ENCODE measurements at regions of chr5 and their contacts with region 1.

Region 1: DNA sequence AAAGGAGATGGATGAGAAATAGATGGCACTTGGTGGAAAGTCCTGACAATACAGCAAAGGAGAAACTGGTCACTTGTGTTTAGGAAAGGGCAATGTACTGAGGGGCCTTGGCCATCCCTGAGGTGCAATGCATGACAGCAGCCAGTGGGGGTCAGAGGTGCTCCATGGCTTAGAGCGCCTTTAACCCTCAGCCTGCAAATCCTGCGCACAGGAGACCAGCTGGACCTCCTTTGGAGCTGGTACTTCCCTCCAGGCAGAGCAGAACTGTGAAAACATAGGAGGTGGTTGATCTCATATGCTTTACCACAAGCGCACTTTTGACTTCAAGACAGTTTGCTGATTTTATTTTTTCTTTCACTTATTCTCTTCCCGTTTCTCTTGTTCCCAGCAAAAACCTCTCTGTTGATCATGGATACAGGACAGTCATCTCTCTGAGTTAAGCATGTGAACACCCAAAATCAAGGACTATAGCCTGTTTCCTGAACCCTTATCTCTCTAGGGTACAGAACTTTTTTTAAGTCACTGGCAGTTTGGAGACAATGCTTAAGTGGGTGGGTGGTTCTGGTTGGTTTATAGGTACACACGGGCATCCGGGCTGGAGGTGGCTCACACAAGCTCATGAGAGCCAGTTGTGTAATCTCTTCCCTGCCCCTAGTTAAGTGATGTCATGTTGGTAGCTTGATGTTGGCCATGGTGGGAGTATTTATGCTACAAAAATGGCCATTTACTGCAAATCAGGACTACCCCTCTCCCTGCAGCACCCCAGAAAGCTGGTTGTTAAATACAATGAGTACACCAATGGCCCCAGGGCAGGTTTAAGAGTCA is 37.6 kb upstream of the ANKRD55 start:
- DNase-seq: peak; percentile 80 to 87 (median 86)
- ATAC-seq: peak; percentile 97 to 100 (median 98)
- H3K4me3 ChIP-seq: no peak overlapping the region
- H3K27ac ChIP-seq: peak overlapping the region in 1 of 12 donors; percentile 48
- H3K4me1 ChIP-seq: peaks cover 0 to 19% (median 2%) of the 10 kb centered on the region in 12 donors
- H3K27me3 ChIP-seq: no peaks in the 10 kb centered on the region
- CTCF ChIP-seq: peak; percentile 95 to 100 (median 99)
- POLR2A ChIP-seq: no peak

Region 2: GRCh38 chr5:56375011-56375410 is 104.2 kb after region 1 on chr5:
- intact Hi-C with region 1: no loop called
- DNase-seq: peak in 3 of 5 donors; percentile 11 to 66 (median 60)
- ATAC-seq: peak; percentile 89 to 98 (median 94)
- H3K4me3 ChIP-seq: no peak overlapping the region
- H3K27ac ChIP-seq: peak overlapping the region in 1 of 12 donors; percentile 4
- H3K4me1 ChIP-seq: peaks cover 0 to 12% (median 0%) of the 10 kb centered on the region in 12 donors
- H3K27me3 ChIP-seq: no peaks in the 10 kb centered on the region
- CTCF ChIP-seq: no peak
- POLR2A ChIP-seq: no peak

Region 3: DNA sequence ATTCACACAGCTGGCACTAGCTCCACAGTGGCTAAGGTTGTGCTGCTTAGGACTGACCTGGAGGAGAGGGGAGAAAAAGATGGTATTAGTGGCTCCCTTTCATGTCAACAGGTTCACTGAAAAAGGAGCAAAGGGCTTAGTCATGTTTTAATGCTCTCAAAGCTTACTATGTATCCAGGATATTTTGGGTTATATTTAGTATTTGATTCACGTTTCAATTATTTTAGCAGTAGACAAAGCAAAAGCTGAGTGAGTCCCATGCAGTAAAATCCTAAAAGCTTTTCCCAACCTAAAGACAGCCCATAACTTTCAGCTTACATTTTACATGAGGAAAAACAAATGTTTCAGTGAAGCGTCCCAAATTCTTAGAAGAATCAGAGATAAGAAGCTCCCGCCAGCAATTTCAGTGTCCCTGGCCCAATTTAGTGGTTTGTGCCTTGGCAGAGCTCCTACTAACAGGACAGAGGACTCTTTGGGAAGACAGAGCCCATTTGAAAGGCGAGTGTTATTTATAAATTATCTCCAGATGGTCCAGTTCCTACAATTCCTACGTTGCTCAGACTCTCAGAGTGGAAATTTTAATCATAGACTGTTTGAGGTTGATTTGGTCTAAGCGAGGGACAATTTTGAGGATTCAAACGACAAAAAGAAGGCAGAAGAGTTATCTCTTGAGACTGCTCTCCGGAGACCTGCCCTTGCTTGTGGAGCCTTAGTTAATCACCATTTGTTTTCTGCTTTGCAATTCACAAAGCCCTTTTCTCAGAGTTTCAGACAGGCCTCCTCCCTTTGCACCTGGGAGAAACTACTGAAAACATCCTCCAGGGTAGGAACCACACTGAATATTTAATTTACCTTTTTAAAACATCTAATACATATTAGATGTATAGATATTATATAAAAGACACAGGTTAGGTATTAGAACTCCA is 187.4 kb after region 1 on chr5:
- intact Hi-C with region 1: loop called in 1 of 10 experiments (anchors 10 kb)
- DNase-seq: peak in 3 of 5 donors; percentile 42 to 61 (median 54)
- ATAC-seq: peak; percentile 68 to 82 (median 73)
- H3K4me3 ChIP-seq: no peak overlapping the region
- H3K27ac ChIP-seq: peak overlapping the region in 10 of 12 donors; percentile 28 to 69 (median 52)
- H3K4me1 ChIP-seq: peaks cover 0 to 41% (median 17%) of the 10 kb centered on the region in 12 donors
- H3K27me3 ChIP-seq: no peaks in the 10 kb centered on the region
- CTCF ChIP-seq: no peak
- POLR2A ChIP-seq: no peak

Region 4: DNA sequence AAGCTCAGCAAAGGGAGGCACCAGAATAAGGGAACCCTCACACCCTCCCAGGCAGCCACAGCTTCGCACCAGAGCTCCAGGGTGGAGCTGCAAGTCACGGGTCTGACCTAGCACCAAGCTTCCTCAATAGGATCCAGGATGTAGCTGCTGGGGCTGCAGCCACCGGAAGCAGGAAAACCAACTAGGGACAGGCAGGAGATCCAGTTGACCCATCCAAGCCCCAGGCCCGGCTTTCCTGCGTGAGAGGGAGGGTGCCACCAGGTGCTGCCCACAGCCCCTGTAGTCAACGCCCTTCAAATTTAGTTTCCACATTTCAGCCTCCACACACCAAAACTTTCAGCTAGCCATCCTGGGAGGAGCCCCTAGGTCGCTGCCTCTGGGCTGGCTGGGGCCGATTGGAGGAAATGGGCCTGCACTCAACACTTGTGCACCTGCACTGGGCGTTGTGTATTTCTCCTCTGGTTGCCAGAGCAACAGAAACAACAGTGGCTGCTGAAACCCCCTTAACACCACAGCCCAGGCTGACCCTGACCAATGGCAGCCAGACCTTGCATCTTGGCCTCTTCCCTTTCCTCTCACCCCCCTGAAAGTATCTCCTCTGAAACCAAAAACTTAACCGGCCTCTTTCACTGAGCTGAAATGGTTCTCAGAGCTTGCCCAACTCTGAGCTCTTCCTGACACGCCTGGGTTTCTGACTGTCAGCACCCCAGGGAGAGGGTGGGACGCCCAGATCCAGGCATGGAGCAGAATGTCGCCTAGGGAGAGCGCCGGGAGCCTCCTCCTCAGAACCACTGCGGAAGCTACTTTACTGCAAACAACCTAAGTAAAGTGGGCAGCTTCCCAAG is 318.1 kb after region 1 on chr5:
- intact Hi-C with region 1: loop called in 1 of 10 experiments (anchors 10 kb)
- DNase-seq: peak; percentile 61 to 86 (median 72)
- ATAC-seq: peak; percentile 23 to 71 (median 64)
- H3K4me3 ChIP-seq: no peak overlapping the region
- H3K27ac ChIP-seq: peak overlapping the region; percentile 1 to 84 (median 61)
- H3K4me1 ChIP-seq: peaks cover 4 to 52% (median 39%) of the 10 kb centered on the region in 12 donors
- H3K27me3 ChIP-seq: no peaks in the 10 kb centered on the region
- CTCF ChIP-seq: no peak
- POLR2A ChIP-seq: no peak

Region 5: GRCh38 chr5:56696900-56697299 is 426.1 kb after region 1 on chr5:
- intact Hi-C with region 1: loop called in 2 of 10 experiments (anchors 10 kb)
- DNase-seq: peak in 2 of 5 donors; percentile 30
- ATAC-seq: no peak
- H3K4me3 ChIP-seq: no peak overlapping the region
- H3K27ac ChIP-seq: peak overlapping the region in 1 of 12 donors; percentile 24
- H3K4me1 ChIP-seq: peaks cover 0 to 45% (median 27%) of the 10 kb centered on the region in 12 donors
- H3K27me3 ChIP-seq: no peaks in the 10 kb centered on the region
- CTCF ChIP-seq: no peak
- POLR2A ChIP-seq: no peak

Region 6: DNA sequence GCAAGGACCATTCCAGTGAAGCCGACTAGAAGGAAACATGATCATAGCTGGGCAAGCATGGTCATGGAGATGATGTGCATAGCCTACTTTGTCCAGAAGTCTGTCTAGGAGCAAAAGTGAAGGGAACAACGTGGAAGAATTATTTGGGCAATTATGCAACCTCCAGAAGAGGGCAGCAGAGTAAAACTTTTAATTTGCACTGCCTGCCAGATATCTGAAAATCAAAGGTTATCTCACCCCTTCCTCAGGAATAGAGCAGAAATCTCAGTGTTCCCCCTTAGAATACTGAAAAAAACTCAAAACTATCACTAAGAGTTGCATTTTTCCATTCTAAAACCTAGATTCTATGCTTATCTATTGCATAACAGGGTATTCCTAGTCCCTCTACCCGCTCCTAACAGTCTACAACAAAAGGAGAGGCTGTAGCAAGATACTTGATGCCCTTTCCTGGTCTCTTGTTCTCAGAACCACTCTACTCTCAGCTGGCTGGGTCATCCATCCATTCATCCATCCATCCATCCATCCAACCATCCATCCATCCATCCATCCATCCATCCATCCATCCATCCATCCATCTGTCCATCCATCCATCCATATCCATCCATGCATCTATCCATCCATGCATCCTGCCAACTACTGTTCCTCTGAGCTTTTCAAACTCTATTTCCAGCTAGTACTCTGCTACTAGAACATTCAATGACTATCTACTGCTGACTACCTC is 630.2 kb after region 1 on chr5:
- intact Hi-C with region 1: loop called in 1 of 10 experiments (anchors 5 kb)
- DNase-seq: no peak
- ATAC-seq: peak in 3 of 4 donors; percentile 47 to 66 (median 53)
- H3K4me3 ChIP-seq: no peak overlapping the region
- H3K27ac ChIP-seq: no peak overlapping the region
- H3K4me1 ChIP-seq: peaks cover 0 to 7% (median 0%) of the 10 kb centered on the region in 12 donors
- H3K27me3 ChIP-seq: no peaks in the 10 kb centered on the region
- CTCF ChIP-seq: peak; percentile 55 to 84 (median 76)
- POLR2A ChIP-seq: no peak

Region 7: GRCh38 chr5:57137401-57137800 is 866.6 kb after region 1 on chr5:
- intact Hi-C with region 1: loop called in 4 of 10 experiments (anchors 5 to 10 kb)
- DNase-seq: no peak
- ATAC-seq: no peak
- H3K4me3 ChIP-seq: no peak overlapping the region
- H3K27ac ChIP-seq: no peak overlapping the region
- H3K4me1 ChIP-seq: no peaks in the 10 kb centered on the region
- H3K27me3 ChIP-seq: peaks cover 0 to 2% (median 0%) of the 10 kb centered on the region in 9 donors
- CTCF ChIP-seq: no peak
- POLR2A ChIP-seq: no peak

Region 8: GRCh38 chr5:57221049-57221568 is 950.3 kb after region 1 on chr5:
- intact Hi-C with region 1: loop called in 4 of 10 experiments (anchors 5 to 10 kb)
- DNase-seq: no peak
- ATAC-seq: peak in 3 of 4 donors; percentile 66 to 78 (median 70)
- H3K4me3 ChIP-seq: no peak overlapping the region
- H3K27ac ChIP-seq: no peak overlapping the region
- H3K4me1 ChIP-seq: peaks cover 0 to 23% (median 3%) of the 10 kb centered on the region in 12 donors
- H3K27me3 ChIP-seq: no peaks in the 10 kb centered on the region
- CTCF ChIP-seq: peak; percentile 84 to 94 (median 91)
- POLR2A ChIP-seq: no peak

Measured in heart left ventricle (tissue), 16 donors.